Colonic mucosa (tissue), 4 donors: ENCODE measurements at regions of chr2 and their contacts with region 1.

Region 1: DNA sequence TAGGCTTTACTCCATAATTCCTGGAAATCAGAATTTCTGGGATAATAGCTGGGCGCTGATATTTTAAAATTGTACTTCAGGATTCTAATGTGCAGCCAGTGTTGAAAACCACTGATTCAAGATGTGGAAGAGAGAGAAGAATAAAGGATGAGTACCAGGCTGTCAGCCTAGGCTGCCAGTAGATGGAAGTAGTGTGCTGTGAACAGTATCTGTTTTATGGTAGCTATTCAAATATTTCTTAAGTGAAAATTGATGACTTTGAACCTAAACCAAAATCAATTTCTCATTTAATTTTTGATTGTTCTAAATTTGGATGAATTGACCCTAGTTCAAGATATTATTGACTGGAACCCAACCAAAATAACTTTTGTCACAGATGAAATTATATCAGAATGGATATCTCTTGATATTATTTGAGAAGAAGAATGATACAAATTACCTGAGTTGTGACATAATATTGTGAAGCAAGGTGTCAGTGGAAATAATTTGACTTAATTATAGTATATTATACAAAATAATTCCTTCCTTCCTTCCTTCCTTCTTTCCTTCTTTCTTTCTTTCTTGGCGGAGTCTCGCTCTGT is 88.1 kb downstream of the COMMD1 start:
- DNase-seq: peak; percentile 25
- H3K4me3 ChIP-seq: no peak overlapping the region
- H3K27ac ChIP-seq: no peak overlapping the region
- H3K4me1 ChIP-seq: no peaks in the 10 kb centered on the region
- H3K27me3 ChIP-seq: no peaks in the 10 kb centered on the region
- CTCF ChIP-seq: peak; percentile 54

Region 2: GRCh38 chr2:61910603-61911002 is 82.9 kb before region 1 on chr2:
- intact Hi-C with region 1: loop called (anchors 10 kb)
- DNase-seq: no peak
- H3K4me3 ChIP-seq: no peak overlapping the region
- H3K27ac ChIP-seq: no peak overlapping the region
- H3K4me1 ChIP-seq: no peaks in the 10 kb centered on the region
- H3K27me3 ChIP-seq: no peaks in the 10 kb centered on the region
- CTCF ChIP-seq: peak; percentile 15

Region 3: GRCh38 chr2:62195421-62196277 is 202.1 kb after region 1 on chr2 and contains the start of gene B3GNT2:
- intact Hi-C with region 1: loop called (anchors 10 kb)
- DNase-seq: peak; percentile 89
- H3K4me3 ChIP-seq: peak within 1 kb of the TSS; percentile 83
- H3K27ac ChIP-seq: peak within 1 kb of the TSS; percentile 93
- H3K4me1 ChIP-seq: peaks cover 3% of the 10 kb centered on the region
- H3K27me3 ChIP-seq: no peaks in the 10 kb centered on the region
- CTCF ChIP-seq: no peak
- total RNA-seq, gene B3GNT2: 20.1 to 55.7 TPM

Region 4: DNA sequence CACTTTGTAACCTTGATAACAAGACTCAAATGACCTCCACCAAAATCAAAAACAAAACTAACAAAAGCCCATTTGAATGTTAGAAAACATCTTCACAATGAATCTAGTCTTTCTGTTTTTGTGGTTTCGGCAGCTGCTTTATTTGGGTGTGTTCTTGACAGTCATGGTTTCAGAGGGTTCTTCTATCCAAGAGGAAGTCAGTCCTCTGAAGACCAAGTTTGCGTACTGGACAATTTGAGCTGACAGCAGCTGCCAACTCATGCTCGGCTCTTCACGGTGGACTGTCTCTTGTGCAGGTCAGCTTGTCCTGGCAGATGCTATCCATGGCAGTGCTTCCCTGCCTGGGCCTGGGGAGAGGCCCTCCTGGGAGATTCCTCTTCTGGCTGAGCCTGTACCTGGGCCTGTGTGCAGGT is 421.5 kb after region 1 on chr2:
- intact Hi-C with region 1: loop called (anchors 5 kb)
- DNase-seq: no peak
- H3K4me3 ChIP-seq: no peak overlapping the region
- H3K27ac ChIP-seq: no peak overlapping the region
- H3K4me1 ChIP-seq: no peaks in the 10 kb centered on the region
- H3K27me3 ChIP-seq: no peaks in the 10 kb centered on the region
- CTCF ChIP-seq: no peak